Activated CD4-positive, alpha-beta memory T cell treated with anti-CD3 and anti-CD28 coated beads, Interleukin-2, amount 10 ng/mL, durations not matched to agents 7 days and 5 days (primary cell): ENCODE measurements at regions of chr5 and their contacts with region 1.

Region 1: DNA sequence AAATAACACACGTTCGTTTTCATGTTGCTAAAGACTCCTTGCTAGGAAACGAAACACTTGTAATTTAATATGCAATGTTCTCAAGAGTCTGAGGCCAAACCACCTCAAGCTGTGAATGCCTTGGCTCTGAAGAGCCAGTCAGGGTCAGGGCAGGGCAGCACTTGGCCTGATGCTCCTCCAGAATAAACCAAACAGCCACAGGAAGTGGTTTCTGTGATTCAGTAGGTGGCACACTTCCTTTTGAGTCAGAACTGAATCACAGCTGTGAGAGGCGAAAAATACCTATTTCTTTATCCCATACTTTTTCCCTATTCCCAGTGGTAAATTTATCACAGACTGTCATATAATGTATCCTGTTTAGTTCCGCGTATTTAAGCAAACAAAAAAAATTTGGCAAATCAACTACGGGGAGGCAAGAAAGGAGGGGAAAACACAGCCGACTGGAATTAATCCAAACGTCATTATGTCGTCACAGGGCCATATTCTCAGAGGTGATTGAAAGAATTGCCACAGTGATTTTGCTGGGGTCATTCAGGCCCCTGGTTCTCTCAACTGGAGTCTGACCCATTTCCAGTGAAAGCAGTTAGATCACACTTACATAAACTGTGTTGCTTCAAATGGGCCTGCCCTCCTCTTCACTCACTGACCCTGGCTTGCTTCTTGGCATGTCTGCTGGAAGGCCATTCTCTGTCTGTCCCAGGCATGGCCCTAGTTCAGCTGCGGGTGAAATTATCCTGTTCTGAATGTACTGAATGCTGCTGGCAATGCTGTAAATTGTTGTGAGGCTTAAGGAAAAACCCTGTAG is 71.2 kb downstream of the ARRDC3 start:
- DNase-seq: peak; percentile 81
- H3K4me3 Mint-ChIP-seq: peak overlapping the region; percentile 83
- H3K27ac Mint-ChIP-seq: peak overlapping the region; percentile 97
- H3K4me1 Mint-ChIP-seq: peaks cover 59% of the 10 kb centered on the region
- H3K27me3 Mint-ChIP-seq: no peaks in the 10 kb centered on the region

Region 2: GRCh38 chr5:91280362-91281269 is 31.3 kb before region 1 on chr5:
- CTCF ChIA-PET with region 1: interaction called, 23 read pairs
- POLR2A ChIA-PET with region 1: interaction called, 75 read pairs
- DNase-seq: peak; percentile 90
- H3K4me3 Mint-ChIP-seq: peak overlapping the region; percentile 73
- H3K27ac Mint-ChIP-seq: peak overlapping the region; percentile 88
- H3K4me1 Mint-ChIP-seq: peaks cover 34% of the 10 kb centered on the region
- H3K27me3 Mint-ChIP-seq: peaks cover 3% of the 10 kb centered on the region

Region 3: GRCh38 chr5:91301106-91301846 is 10.6 kb before region 1 on chr5:
- CTCF ChIA-PET with region 1: interaction called, 3 read pairs
- POLR2A ChIA-PET with region 1: interaction called, 10 read pairs
- DNase-seq: no peak
- H3K4me3 Mint-ChIP-seq: no peak overlapping the region
- H3K27ac Mint-ChIP-seq: no peak overlapping the region
- H3K4me1 Mint-ChIP-seq: peaks cover 2% of the 10 kb centered on the region
- H3K27me3 Mint-ChIP-seq: no peaks in the 10 kb centered on the region

Region 4: GRCh38 chr5:91332267-91333045 is 20.6 kb after region 1 on chr5:
- CTCF ChIA-PET with region 1: interaction called, 5 read pairs
- POLR2A ChIA-PET with region 1: interaction called, 10 read pairs
- DNase-seq: peak; percentile 50
- H3K4me3 Mint-ChIP-seq: no peak overlapping the region
- H3K27ac Mint-ChIP-seq: peak overlapping the region; percentile 61
- H3K4me1 Mint-ChIP-seq: peaks cover 36% of the 10 kb centered on the region
- H3K27me3 Mint-ChIP-seq: peaks cover 2% of the 10 kb centered on the region

Region 5: GRCh38 chr5:91373600-91373999 is 61.7 kb after region 1 on chr5:
- CTCF ChIA-PET with region 1: no interaction called
- POLR2A ChIA-PET with region 1: interaction called, 184 read pairs
- DNase-seq: no peak
- H3K4me3 Mint-ChIP-seq: no peak overlapping the region
- H3K27ac Mint-ChIP-seq: no peak overlapping the region
- H3K4me1 Mint-ChIP-seq: peaks cover 45% of the 10 kb centered on the region
- H3K27me3 Mint-ChIP-seq: no peaks in the 10 kb centered on the region